MCF 10A (cell line): ENCODE measurements at regions of chr6 and their contacts with region 1.

Region 1: GRCh38 chr6:136643850-136644596 is 93.8 kb upstream of the MAP7 start:
- DNase-seq: peak; percentile 94
- H3K4me3 Mint-ChIP-seq: no peak overlapping the region
- H3K27ac Mint-ChIP-seq: peak overlapping the region; percentile 16
- H3K4me1 Mint-ChIP-seq: peaks cover 6% of the 10 kb centered on the region
- H3K27me3 Mint-ChIP-seq: no peaks in the 10 kb centered on the region
- CTCF ChIP-seq: peak; percentile 73

Region 2: DNA sequence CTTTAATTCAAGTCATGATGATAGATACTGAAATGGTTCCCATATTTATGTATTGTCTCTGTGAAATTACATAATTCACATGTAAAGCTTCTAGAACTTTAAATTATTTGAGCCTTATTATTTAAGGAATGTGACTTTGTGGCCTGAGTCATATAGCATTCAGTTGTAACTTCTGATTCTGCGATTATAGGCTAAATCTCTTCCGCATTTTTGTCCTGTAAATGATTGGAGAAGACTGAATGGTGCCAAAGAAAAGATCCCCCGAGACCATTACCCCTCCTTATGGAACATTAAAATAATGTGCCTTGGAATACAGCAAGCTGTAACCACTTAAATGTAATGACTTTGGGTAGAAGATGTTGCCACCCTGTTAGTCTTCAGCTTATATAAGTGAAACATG is 30.5 kb before region 1 on chr6:
- CTCF ChIA-PET with region 1: interaction called, 15 read pairs
- POLR2A ChIA-PET with region 1: no interaction called
- intact Hi-C with region 1: loop called (anchors 1 kb)
- DNase-seq: no peak
- H3K4me3 Mint-ChIP-seq: no peak overlapping the region
- H3K27ac Mint-ChIP-seq: no peak overlapping the region
- H3K4me1 Mint-ChIP-seq: peaks cover 21% of the 10 kb centered on the region
- H3K27me3 Mint-ChIP-seq: no peaks in the 10 kb centered on the region
- CTCF ChIP-seq: no peak

Region 3: GRCh38 chr6:136669299-136669699 is 25.3 kb after region 1 on chr6:
- CTCF ChIA-PET with region 1: interaction called, 49 read pairs
- POLR2A ChIA-PET with region 1: interaction called, 7 read pairs
- intact Hi-C with region 1: no loop called
- DNase-seq: peak; percentile 92
- H3K4me3 Mint-ChIP-seq: peak overlapping the region; percentile 5
- H3K27ac Mint-ChIP-seq: peak overlapping the region; percentile 47
- H3K4me1 Mint-ChIP-seq: peaks cover 16% of the 10 kb centered on the region
- H3K27me3 Mint-ChIP-seq: no peaks in the 10 kb centered on the region
- CTCF ChIP-seq: no peak

Region 4: GRCh38 chr6:136696238-136696637 is 52.2 kb after region 1 on chr6:
- CTCF ChIA-PET with region 1: interaction called, 16 read pairs
- POLR2A ChIA-PET with region 1: interaction called, 15 read pairs
- intact Hi-C with region 1: no loop called
- DNase-seq: peak; percentile 62
- H3K4me3 Mint-ChIP-seq: peak overlapping the region; percentile 60
- H3K27ac Mint-ChIP-seq: peak overlapping the region; percentile 86
- H3K4me1 Mint-ChIP-seq: peaks cover 38% of the 10 kb centered on the region
- H3K27me3 Mint-ChIP-seq: no peaks in the 10 kb centered on the region
- CTCF ChIP-seq: no peak

Region 5: DNA sequence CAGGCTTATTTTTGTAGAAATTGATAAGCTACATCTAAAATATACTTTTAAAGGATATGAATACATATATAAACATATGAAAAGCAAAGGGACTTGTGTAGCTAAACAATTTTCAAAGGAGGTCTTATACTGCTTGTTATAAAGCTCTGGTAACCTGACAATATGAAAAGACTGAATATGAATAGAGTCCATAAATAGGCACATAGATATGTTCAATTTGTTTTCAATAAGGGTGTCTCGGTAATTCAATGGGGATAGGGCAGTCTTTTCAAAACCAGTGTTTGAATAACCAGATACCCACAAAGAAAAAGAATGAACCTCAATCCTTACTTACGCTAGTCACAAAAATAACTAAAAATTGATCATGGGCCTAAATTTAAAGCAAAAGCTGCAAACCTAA is 157.6 kb after region 1 on chr6:
- CTCF ChIA-PET with region 1: interaction called, 71 read pairs
- POLR2A ChIA-PET with region 1: no interaction called
- intact Hi-C with region 1: no loop called
- DNase-seq: no peak
- H3K4me3 Mint-ChIP-seq: no peak overlapping the region
- H3K27ac Mint-ChIP-seq: no peak overlapping the region
- H3K4me1 Mint-ChIP-seq: no peaks in the 10 kb centered on the region
- H3K27me3 Mint-ChIP-seq: no peaks in the 10 kb centered on the region
- CTCF ChIP-seq: no peak